OCI-LY7 (cell line): ENCODE measurements at regions of chr10 and their contacts with region 1.

Region 1: DNA sequence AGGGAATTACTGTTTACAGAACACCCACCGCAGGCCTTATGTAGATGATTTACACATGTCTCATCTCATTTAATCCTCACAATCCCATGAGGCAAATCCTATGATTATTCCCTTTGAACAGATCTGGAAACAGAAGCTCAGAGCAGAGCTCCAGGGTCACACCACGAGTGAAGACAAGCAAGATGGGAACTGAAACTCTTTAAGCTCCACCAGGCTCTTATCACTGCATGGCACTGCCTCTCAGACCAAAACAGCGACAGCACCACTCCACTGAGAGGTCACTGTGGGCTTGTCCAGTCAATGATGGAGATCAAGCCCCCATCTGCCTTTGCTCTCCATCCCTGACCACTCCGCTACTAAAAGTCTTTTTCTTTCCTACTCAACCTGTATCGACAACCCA is 5.9 kb downstream of the GRID1 start:
- DNase-seq: no peak
- H3K4me3 ChIP-seq: no peak overlapping the region
- H3K27ac ChIP-seq: no peak overlapping the region
- H3K4me1 ChIP-seq: peaks cover 15% of the 10 kb centered on the region
- CTCF ChIP-seq: no peak

Region 2: GRCh38 chr10:86319676-86320075 is 41.0 kb before region 1 on chr10:
- CTCF ChIA-PET with region 1: interaction called, 13 read pairs
- POLR2A ChIA-PET with region 1: no interaction called
- intact Hi-C with region 1: no loop called
- DNase-seq: no peak
- H3K4me3 ChIP-seq: no peak overlapping the region
- H3K27ac ChIP-seq: no peak overlapping the region
- H3K4me1 ChIP-seq: no peaks in the 10 kb centered on the region
- CTCF ChIP-seq: no peak